ENCODE measurements at regions of chr15 and their contacts with region 1.

Region 1: DNA sequence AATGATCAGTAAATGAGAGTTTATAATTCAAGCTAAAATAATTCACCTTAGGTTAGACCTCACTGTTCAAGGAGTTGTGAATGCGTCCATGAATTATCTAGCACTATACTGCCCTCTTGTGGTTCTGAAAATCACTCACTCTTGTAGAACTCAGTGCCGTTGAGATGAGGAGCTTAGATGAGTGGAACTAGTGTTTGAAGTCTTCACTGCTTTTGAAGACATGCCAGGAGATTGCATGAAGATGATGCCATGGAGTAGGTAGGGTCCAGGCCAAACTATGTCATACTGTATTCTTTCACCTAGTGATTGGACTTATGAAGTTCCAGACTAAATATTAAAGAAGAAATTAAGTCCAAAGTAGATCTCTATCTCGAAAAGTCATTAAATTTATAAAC is 28.8 kb downstream of the LYSMD4 start:
- DNase-seq: peak; percentile 46
- H3K4me3 ChIP-seq: no peak overlapping the region
- H3K27ac ChIP-seq: no peak overlapping the region
- H3K4me1 ChIP-seq: peaks cover 4% of the 10 kb centered on the region
- H3K27me3 ChIP-seq: no peaks in the 10 kb centered on the region
- CTCF ChIP-seq: peak; percentile 84

Region 2: DNA sequence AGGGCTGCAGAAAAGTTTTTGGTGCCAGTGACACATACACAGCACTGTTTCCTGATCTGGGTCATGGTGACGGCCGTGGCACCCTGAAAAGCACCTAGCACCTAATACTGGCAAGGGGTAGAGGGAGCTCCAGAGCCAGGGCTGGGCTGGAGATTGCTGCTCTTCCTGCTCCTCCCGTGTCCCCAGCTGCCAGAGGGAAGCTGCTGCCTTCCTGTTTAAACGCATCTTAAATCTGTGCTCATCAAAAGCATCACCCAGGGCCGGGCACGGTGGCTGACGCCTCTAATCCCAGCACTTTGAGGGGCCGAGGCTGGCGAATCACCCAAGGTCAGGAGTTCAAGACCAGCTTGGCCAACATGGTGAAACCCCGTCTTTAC is 295.4 kb before region 1 on chr15:
- intact Hi-C with region 1: loop called (anchors 10 kb)
- DNase-seq: peak; percentile 67
- H3K4me3 ChIP-seq: no peak overlapping the region
- H3K27ac ChIP-seq: no peak overlapping the region
- H3K4me1 ChIP-seq: peaks cover 7% of the 10 kb centered on the region
- H3K27me3 ChIP-seq: no peaks in the 10 kb centered on the region
- CTCF ChIP-seq: peak; percentile 58

Region 3: GRCh38 chr15:99526176-99526575 is 178.3 kb before region 1 on chr15:
- intact Hi-C with region 1: no loop called
- DNase-seq: no peak
- H3K4me3 ChIP-seq: no peak overlapping the region
- H3K27ac ChIP-seq: no peak overlapping the region
- H3K4me1 ChIP-seq: no peaks in the 10 kb centered on the region
- H3K27me3 ChIP-seq: no peaks in the 10 kb centered on the region
- CTCF ChIP-seq: no peak

Region 4: GRCh38 chr15:99605490-99605931 is 98.9 kb before region 1 on chr15:
- intact Hi-C with region 1: no loop called
- DNase-seq: no peak
- H3K4me3 ChIP-seq: no peak overlapping the region
- H3K27ac ChIP-seq: no peak overlapping the region
- H3K4me1 ChIP-seq: no peaks in the 10 kb centered on the region
- H3K27me3 ChIP-seq: no peaks in the 10 kb centered on the region
- CTCF ChIP-seq: no peak

Region 5: DNA sequence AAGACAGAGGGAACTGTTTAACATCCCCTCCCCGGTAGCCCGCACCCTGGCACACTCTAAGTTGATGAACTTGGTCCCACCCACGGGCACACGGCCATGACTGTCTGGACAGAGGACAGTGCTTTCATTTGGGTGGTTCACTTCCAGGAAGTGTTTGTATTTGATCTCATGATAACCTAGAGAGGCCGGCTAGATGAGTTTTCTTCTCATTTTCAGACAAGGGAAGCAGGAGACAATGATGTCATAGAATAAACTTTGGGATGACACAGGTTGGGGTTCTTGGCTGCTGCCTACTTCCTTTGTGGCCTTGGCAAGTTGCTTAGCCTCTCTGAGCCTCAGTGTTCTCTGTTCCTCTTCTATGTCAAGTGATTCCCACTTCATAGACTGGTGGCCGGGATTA is 44.9 kb after region 1 on chr15:
- intact Hi-C with region 1: no loop called
- DNase-seq: peak; percentile 49
- H3K4me3 ChIP-seq: no peak overlapping the region
- H3K27ac ChIP-seq: no peak overlapping the region
- H3K4me1 ChIP-seq: no peaks in the 10 kb centered on the region
- H3K27me3 ChIP-seq: no peaks in the 10 kb centered on the region
- CTCF ChIP-seq: no peak